ENCODE measurements at regions of chr6 and their contacts with region 1.

Region 1: DNA sequence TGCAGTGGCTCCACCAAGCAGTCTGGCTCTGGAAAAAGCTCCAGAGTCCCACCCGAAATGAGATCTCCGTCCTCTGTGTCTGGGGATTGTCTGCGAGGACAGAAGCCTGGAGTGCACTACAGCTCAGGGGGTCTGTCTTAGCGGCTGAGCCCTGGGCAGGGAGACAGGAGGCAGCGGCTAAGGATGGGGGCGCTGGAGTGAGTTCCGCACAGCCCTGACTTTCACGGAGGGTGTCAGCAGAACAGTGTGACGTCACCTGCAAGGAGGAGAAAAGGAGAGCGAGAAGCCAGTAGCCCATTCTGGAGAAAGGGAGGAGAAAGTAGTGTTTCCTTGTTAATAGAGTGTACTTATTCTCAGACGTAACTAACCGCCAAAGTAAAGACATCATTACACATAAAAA is 97.6 kb downstream of the FAM50B start:
- DNase-seq: no peak
- ATAC-seq: no peak
- H3K4me3 Mint-ChIP-seq: no peak overlapping the region
- H3K27ac Mint-ChIP-seq: no peak overlapping the region
- H3K4me1 Mint-ChIP-seq: peaks cover 2% of the 10 kb centered on the region
- H3K27me3 Mint-ChIP-seq: peaks cover 36% of the 10 kb centered on the region

Region 2: GRCh38 chr6:3929281-3929798 is 17.4 kb before region 1 on chr6:
- CTCF ChIA-PET with region 1: interaction called, 10 read pairs
- POLR2A ChIA-PET with region 1: no interaction called
- intact Hi-C with region 1: no loop called
- DNase-seq: no peak
- ATAC-seq: no peak
- H3K4me3 Mint-ChIP-seq: no peak overlapping the region
- H3K27ac Mint-ChIP-seq: no peak overlapping the region
- H3K4me1 Mint-ChIP-seq: no peaks in the 10 kb centered on the region
- H3K27me3 Mint-ChIP-seq: peaks cover 3% of the 10 kb centered on the region

Measured in activated CD4-positive, alpha-beta T cell treated with anti-CD3 and anti-CD28 coated beads for 36 hours (primary cell).